GM13976 (cell line): ENCODE measurements at regions of chr22 and their contacts with region 1.

Region 1: GRCh38 chr22:22802339-22802970 is 85.2 kb upstream of the IGLL5 start:
- DNase-seq: no peak
- CTCF ChIP-seq: no peak

Region 2: DNA sequence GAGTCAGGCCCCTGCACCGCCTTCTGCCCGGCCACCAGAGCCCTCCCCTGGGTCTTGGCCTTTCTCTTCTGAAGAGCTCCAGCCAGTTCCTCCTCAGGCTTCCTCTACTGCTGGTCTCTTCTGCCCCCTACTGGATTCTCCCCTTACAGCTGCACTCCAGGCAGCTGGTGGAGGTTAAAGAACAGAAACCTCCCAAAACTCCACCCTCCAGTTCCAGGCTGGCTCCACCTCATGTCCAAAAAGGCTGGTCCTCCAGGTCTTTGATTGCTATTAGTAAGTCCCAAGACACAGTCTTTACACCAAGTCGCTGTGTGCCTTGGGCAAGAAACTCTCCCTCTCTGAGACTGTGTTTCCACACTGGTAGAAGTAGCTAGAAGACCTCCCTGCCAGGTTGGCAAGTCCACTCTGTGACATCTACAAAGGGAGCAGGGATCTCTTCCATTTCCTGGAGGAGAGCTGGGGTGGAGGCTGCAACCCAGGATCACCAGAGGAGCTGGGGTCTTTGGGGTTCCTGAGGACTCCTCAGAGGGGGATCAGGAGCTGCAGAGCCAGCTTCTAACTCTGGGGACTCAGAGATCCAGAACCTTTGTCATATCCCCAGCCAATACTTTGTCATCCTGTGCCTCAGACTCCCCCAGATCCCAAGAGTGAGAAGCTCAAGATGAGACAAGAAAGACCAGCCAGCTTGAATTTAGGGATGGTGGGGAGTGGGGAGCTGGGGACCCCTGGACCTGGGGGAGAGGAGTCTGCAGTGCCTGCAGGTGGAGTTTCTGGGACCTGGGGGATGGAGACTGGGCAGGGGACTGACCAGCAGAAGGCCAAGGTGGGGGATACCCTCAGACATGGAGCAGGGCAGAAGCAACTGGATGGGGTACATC is 81.8 kb after region 1 on chr22:
- in situ Hi-C with region 1: loop called (anchors 5 kb)
- DNase-seq: peak; percentile 83
- CTCF ChIP-seq: peak; percentile 47